Gastrocnemius medialis (tissue), 4 donors: ENCODE measurements at regions of chr7 and their contacts with region 1.

Region 1: GRCh38 chr7:37181550-37181932 is 267.1 kb downstream of the ELMO1 start:
- DNase-seq: no peak
- ATAC-seq: no peak
- H3K4me3 ChIP-seq: no peak overlapping the region
- H3K27ac ChIP-seq: no peak overlapping the region
- H3K4me1 ChIP-seq: no peaks in the 10 kb centered on the region
- H3K27me3 ChIP-seq: no peaks in the 10 kb centered on the region
- CTCF ChIP-seq: no peak
- POLR2A ChIP-seq: no peak

Region 2: GRCh38 chr7:35906191-35906908 is 1275.2 kb before region 1 on chr7:
- in situ Hi-C with region 1: no loop called
- intact Hi-C with region 1: loop called (anchors 10 kb)
- DNase-seq: peak; percentile 30 to 44
- ATAC-seq: peak; percentile 90 to 95
- H3K4me3 ChIP-seq: no peak overlapping the region
- H3K27ac ChIP-seq: no peak overlapping the region
- H3K4me1 ChIP-seq: peaks cover 0 to 4% of the 10 kb centered on the region in 2 donors
- H3K27me3 ChIP-seq: no peaks in the 10 kb centered on the region
- CTCF ChIP-seq: peak; percentile 88 to 96 (median 94)
- POLR2A ChIP-seq: no peak

Region 3: DNA sequence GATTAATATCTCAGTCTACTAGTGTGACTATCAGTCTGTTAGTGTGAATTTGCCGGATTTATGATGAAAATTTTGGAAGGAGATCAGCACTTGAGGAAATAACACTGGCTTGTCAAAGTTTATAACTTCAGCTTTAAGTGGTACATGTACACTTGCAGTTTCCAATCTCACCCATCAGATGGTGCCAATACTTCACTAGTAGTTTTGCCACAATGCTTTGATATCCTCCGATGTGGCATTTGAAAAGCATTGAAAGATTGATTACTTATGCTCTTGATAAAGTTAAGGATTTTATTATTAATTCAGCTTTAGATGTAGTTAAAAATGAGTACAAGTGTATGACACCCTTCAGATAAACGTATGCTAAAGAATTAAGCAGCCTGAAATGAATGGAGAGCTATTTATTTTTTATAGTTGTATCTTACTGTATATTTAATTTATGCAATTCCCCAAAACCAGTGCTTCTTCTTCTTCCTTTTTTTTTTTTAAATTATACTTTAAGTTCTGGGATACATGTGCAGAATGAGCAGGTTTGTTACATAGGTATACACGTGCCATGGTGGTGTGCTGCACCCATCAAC is 693.7 kb before region 1 on chr7:
- in situ Hi-C with region 1: loop called in 1 of 4 experiments (anchors 10 kb)
- intact Hi-C with region 1: loop called (anchors 10 kb)
- DNase-seq: no peak
- ATAC-seq: no peak
- H3K4me3 ChIP-seq: no peak overlapping the region
- H3K27ac ChIP-seq: no peak overlapping the region
- H3K4me1 ChIP-seq: no peaks in the 10 kb centered on the region
- H3K27me3 ChIP-seq: no peaks in the 10 kb centered on the region
- CTCF ChIP-seq: peak in 3 of 5 experiments; percentile 20 to 44 (median 43)
- POLR2A ChIP-seq: no peak

Region 4: DNA sequence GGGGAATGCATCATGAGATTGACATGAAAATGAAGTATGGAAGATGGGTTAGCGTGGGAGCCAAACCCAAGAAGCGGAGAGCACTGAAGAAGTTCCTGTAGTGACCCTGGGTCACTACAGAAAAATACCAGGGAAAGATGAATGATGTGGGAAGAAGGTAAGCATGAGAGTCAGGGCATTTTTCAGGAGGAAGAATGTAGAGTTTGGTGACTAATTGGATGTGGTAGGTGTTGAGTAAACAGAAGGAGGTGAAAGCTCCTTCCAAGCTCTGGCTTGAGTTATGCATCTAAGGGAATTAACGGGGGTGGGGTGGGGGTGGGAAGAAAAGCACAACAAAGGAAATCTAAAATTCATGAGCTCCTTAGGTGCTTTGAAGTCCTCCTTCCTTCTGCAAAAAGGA is 219.2 kb before region 1 on chr7:
- in situ Hi-C with region 1: loop called in 1 of 4 experiments (anchors 5 kb)
- intact Hi-C with region 1: loop called (anchors 2 kb)
- DNase-seq: no peak
- ATAC-seq: no peak
- H3K4me3 ChIP-seq: no peak overlapping the region
- H3K27ac ChIP-seq: no peak overlapping the region
- H3K4me1 ChIP-seq: peaks cover 0 to 9% of the 10 kb centered on the region in 2 donors
- H3K27me3 ChIP-seq: no peaks in the 10 kb centered on the region
- CTCF ChIP-seq: no peak
- POLR2A ChIP-seq: no peak

Region 5: DNA sequence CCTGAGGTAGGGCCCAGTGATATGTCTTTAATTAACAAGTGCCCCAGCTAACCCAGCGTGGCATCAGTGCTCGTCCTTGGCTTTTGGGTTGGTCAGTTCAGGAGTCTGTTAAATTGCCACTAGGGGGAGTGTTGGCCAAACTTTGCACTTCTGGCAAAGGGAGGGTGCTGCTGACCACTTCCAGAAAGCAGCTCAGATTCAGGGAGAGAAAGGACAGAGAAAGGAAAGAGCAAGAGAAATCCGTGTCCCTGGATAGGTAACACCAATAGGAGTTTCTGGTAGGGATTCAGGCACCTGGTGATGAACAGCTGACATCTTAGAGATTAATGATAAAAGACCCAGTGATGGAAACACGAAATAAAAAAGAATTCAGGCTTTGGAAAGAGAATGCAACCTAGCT is 214.2 kb before region 1 on chr7:
- in situ Hi-C with region 1: loop called in 1 of 4 experiments (anchors 5 kb)
- intact Hi-C with region 1: loop called (anchors 2 kb)
- DNase-seq: peak; percentile 26 to 41
- ATAC-seq: peak; percentile 91 to 94
- H3K4me3 ChIP-seq: no peak overlapping the region
- H3K27ac ChIP-seq: no peak overlapping the region
- H3K4me1 ChIP-seq: peaks cover 0 to 12% of the 10 kb centered on the region in 2 donors
- H3K27me3 ChIP-seq: no peaks in the 10 kb centered on the region
- CTCF ChIP-seq: peak; percentile 40 to 81 (median 59)
- POLR2A ChIP-seq: no peak

Region 6: GRCh38 chr7:36986429-36987362 is 194.8 kb before region 1 on chr7:
- in situ Hi-C with region 1: loop called in 3 of 4 experiments (anchors 5 to 10 kb)
- intact Hi-C with region 1: loop called (anchors 1 kb)
- DNase-seq: peak; percentile 5 to 44
- ATAC-seq: peak; percentile 47 to 51
- H3K4me3 ChIP-seq: no peak overlapping the region
- H3K27ac ChIP-seq: no peak overlapping the region
- H3K4me1 ChIP-seq: peaks cover 0 to 4% of the 10 kb centered on the region in 2 donors
- H3K27me3 ChIP-seq: no peaks in the 10 kb centered on the region
- CTCF ChIP-seq: peak; percentile 70 to 78 (median 74)
- POLR2A ChIP-seq: no peak